Activated CD4-positive, alpha-beta T cell treated with anti-CD3 and anti-CD28 coated beads for 36 hours (primary cell): ENCODE measurements at regions of chr1 and their contacts with region 1.

Region 1: GRCh38 chr1:33472349-33472980 is at the start of gene ZSCAN20:
- DNase-seq: peak; percentile 94
- ATAC-seq: peak; percentile 97
- H3K4me3 Mint-ChIP-seq: peak within 1 kb of the TSS; percentile 81
- H3K27ac Mint-ChIP-seq: peak within 1 kb of the TSS; percentile 71
- H3K4me1 Mint-ChIP-seq: peaks cover 23% of the 10 kb centered on the region
- H3K27me3 Mint-ChIP-seq: no peaks in the 10 kb centered on the region
- total RNA-seq, gene ZSCAN20: 3.4 to 5.4 TPM

Region 2: GRCh38 chr1:33036526-33037503 is 435.6 kb before region 1 on chr1 and contains the start of gene AK2:
- CTCF ChIA-PET with region 1: no interaction called
- POLR2A ChIA-PET with region 1: no interaction called
- intact Hi-C with region 1: loop called in 1 of 2 experiments (anchors 1 kb)
- DNase-seq: peak; percentile 96
- ATAC-seq: peak; percentile 100
- H3K4me3 Mint-ChIP-seq: peak within 1 kb of the TSS; percentile 96
- H3K27ac Mint-ChIP-seq: peak within 1 kb of the TSS; percentile 87
- H3K4me1 Mint-ChIP-seq: peaks cover 41% of the 10 kb centered on the region
- H3K27me3 Mint-ChIP-seq: no peaks in the 10 kb centered on the region
- total RNA-seq, gene AK2: 386 to 464 TPM

Region 3: GRCh38 chr1:33081554-33082305 is 390.7 kb before region 1 on chr1:
- CTCF ChIA-PET with region 1: no interaction called
- POLR2A ChIA-PET with region 1: no interaction called
- intact Hi-C with region 1: no loop called
- DNase-seq: no peak
- ATAC-seq: no peak
- H3K4me3 Mint-ChIP-seq: peak overlapping the region; percentile 61
- H3K27ac Mint-ChIP-seq: no peak overlapping the region
- H3K4me1 Mint-ChIP-seq: peaks cover 19% of the 10 kb centered on the region
- H3K27me3 Mint-ChIP-seq: peaks cover 3% of the 10 kb centered on the region

Region 4: GRCh38 chr1:33127001-33127791 is 345.3 kb before region 1 on chr1:
- CTCF ChIA-PET with region 1: interaction called, 3 read pairs
- POLR2A ChIA-PET with region 1: no interaction called
- intact Hi-C with region 1: loop called in 1 of 2 experiments (anchors 1 kb)
- DNase-seq: peak; percentile 99
- ATAC-seq: peak; percentile 95
- H3K4me3 Mint-ChIP-seq: peak overlapping the region; percentile 97
- H3K27ac Mint-ChIP-seq: peak overlapping the region; percentile 98
- H3K4me1 Mint-ChIP-seq: peaks cover 40% of the 10 kb centered on the region
- H3K27me3 Mint-ChIP-seq: no peaks in the 10 kb centered on the region

Region 5: GRCh38 chr1:33256701-33257399 is 215.6 kb before region 1 on chr1:
- CTCF ChIA-PET with region 1: no interaction called
- POLR2A ChIA-PET with region 1: no interaction called
- intact Hi-C with region 1: loop called in 1 of 2 experiments (anchors 1 kb)
- DNase-seq: peak; percentile 72
- ATAC-seq: peak; percentile 50
- H3K4me3 Mint-ChIP-seq: peak overlapping the region; percentile 95
- H3K27ac Mint-ChIP-seq: peak overlapping the region; percentile 98
- H3K4me1 Mint-ChIP-seq: peaks cover 39% of the 10 kb centered on the region
- H3K27me3 Mint-ChIP-seq: no peaks in the 10 kb centered on the region

Region 6: GRCh38 chr1:33349778-33350610 is 122.5 kb before region 1 on chr1:
- CTCF ChIA-PET with region 1: interaction called, 4 read pairs
- POLR2A ChIA-PET with region 1: no interaction called
- intact Hi-C with region 1: loop called (anchors 1 to 5 kb)
- DNase-seq: peak; percentile 87
- ATAC-seq: peak; percentile 87
- H3K4me3 Mint-ChIP-seq: peak overlapping the region; percentile 89
- H3K27ac Mint-ChIP-seq: peak overlapping the region; percentile 93
- H3K4me1 Mint-ChIP-seq: peaks cover 43% of the 10 kb centered on the region
- H3K27me3 Mint-ChIP-seq: no peaks in the 10 kb centered on the region

Region 7: GRCh38 chr1:33430692-33431593 is 41.5 kb before region 1 on chr1 and contains the start of gene PHC2:
- CTCF ChIA-PET with region 1: interaction called, 5 read pairs
- POLR2A ChIA-PET with region 1: no interaction called
- intact Hi-C with region 1: loop called (anchors 1 to 2 kb)
- DNase-seq: peak; percentile 95
- ATAC-seq: peak; percentile 99
- H3K4me3 Mint-ChIP-seq: peak within 1 kb of the TSS; percentile 58
- H3K27ac Mint-ChIP-seq: no peak within 1 kb of the TSS
- H3K4me1 Mint-ChIP-seq: peaks cover 5% of the 10 kb centered on the region
- H3K27me3 Mint-ChIP-seq: peaks cover 5% of the 10 kb centered on the region
- total RNA-seq, gene PHC2: 23.8 to 28.4 TPM

Region 8: DNA sequence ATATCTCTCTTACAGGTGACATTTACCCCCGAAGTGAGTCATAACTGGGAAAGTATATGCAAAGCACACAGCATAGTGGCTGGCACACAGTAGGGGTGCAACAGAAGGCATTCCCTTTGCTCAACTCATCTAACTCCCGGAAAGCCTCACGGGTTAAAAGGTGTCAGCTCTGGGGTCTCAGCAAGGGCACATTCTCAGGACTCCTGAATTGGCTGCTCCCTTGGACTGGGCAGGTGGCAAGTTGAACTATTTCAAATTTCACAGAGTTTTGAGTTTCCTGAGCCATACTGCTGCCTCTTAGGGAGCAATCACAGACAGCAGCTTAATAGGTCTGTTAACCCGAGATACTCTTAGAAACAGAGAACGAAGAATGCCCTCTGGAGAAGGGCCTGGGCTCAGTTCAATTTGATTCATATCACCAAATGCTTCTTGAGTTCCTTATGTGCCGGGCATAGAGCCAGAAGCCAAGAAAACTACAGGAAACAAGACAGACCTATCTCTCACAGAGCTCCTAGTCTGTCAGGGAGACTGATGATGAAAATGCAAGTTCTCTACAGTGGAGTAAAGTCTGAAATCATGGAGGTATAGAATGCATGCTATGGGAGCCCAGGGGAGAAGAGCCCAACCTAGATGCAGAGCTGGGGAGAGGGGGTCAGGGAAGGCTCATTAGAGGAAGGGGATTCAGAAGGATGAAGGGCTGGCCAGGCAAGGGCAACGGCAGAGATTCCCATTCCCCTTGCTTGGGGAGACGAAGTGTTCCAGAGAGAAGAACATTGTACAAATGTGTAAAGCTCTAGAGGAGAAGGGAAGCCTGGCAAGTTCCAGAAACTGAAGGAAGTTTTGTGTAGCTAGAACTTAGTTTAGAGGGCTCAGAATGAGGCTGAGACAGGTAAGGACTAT is 247.6 kb after region 1 on chr1:
- CTCF ChIA-PET with region 1: no interaction called
- POLR2A ChIA-PET with region 1: no interaction called
- intact Hi-C with region 1: no loop called
- DNase-seq: no peak
- ATAC-seq: no peak
- H3K4me3 Mint-ChIP-seq: no peak overlapping the region
- H3K27ac Mint-ChIP-seq: no peak overlapping the region
- H3K4me1 Mint-ChIP-seq: no peaks in the 10 kb centered on the region
- H3K27me3 Mint-ChIP-seq: peaks cover 6% of the 10 kb centered on the region

Region 9: DNA sequence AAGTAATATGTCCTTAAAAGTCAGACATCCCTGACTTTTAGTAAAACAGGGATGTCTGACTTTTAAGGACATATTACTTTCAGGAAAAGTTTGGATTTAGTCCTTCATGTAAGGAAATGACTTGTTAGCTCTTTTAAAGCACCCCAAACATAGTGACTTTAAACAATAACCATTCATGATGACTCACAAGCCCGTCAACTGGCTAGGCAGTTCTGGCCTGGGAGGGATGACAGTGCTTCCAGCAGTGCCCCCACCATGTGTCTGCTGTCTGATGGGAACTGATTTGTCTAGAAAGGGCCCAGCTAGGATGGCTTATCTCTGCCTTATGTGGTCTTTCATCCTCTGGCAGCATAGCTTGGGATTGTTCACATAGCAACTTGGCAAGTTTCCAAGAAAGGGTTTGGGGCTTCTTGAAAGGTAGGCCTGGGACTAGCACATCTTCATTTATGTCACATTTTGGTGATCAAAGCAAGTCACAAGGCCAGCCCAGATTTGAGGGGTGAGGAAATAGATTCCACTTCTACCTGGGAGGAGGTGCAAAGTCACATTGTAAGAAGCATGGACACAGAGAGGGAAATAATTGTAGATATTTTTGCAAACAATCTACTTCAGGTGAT is 847.7 kb after region 1 on chr1:
- CTCF ChIA-PET with region 1: no interaction called
- POLR2A ChIA-PET with region 1: no interaction called
- intact Hi-C with region 1: no loop called
- DNase-seq: no peak
- ATAC-seq: no peak
- H3K4me3 Mint-ChIP-seq: no peak overlapping the region
- H3K27ac Mint-ChIP-seq: no peak overlapping the region
- H3K4me1 Mint-ChIP-seq: no peaks in the 10 kb centered on the region
- H3K27me3 Mint-ChIP-seq: peaks cover 7% of the 10 kb centered on the region